H1 (cell line): ENCODE measurements at regions of chr2 and their contacts with region 1.

Region 1: DNA sequence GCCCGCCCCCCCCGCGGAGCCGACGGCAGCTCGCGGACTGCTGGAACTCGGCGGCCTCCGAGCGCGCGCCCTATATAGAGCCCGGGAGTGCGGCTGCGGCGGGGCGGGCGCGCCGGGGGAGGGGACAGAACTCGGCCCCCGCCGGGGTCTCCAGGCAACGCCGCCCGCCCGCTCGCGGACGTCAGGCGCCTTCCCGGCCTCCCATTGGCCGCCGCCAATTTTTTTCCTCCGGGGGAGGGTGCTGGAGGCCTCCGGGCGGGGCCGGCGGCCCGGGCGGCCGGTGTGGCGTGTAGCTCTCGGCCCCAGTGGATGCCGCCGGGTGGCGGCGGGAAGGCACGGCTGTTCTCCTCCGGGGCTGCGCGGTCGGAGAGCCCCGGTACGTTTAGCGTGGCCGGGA is at the start of gene ZFP36L2:
- DNase-seq: peak in 1 of 2 experiments; percentile 90
- H3K4me3 ChIP-seq: peak within 1 kb of the TSS; percentile 76 to 88 (median 85)
- H3K27ac ChIP-seq: peak within 1 kb of the TSS; percentile 95
- H3K4me1 ChIP-seq: peaks cover 5 to 16% (median 10%) of the 10 kb centered on the region in 4 experiments; a peak in 5 of 7 replicates
- H3K27me3 ChIP-seq: no peaks in the 10 kb centered on the region
- CTCF ChIP-seq: no peak
- EP300 ChIP-seq: no peak
- POLR2A ChIP-seq: peak in 1 of 2 experiments; percentile 86; a peak in 2 of 3 replicates
- RAD21 ChIP-seq: no peak
- total RNA-seq, gene ZFP36L2: 102 and 109 TPM in 2 replicates

Region 2: GRCh38 chr2:42928692-42929545 is 297.6 kb before region 1 on chr2:
- CTCF ChIA-PET with region 1: interaction called, 16 read pairs
- POLR2A ChIA-PET with region 1: no interaction called
- DNase-seq: peak in 1 of 2 experiments; percentile 70
- H3K4me3 ChIP-seq: no peak overlapping the region; a peak in 1 of 8 replicates
- H3K27ac ChIP-seq: peak overlapping the region; percentile 56
- H3K4me1 ChIP-seq: peaks cover 29 to 49% (median 41%) of the 10 kb centered on the region in 4 experiments
- H3K27me3 ChIP-seq: no peaks in the 10 kb centered on the region
- CTCF ChIP-seq: peak in 2 of 3 experiments; percentile 69 to 77; a peak in 3 of 4 replicates
- EP300 ChIP-seq: no peak
- POLR2A ChIP-seq: no peak
- RAD21 ChIP-seq: peak; percentile 33 to 48; a peak in 3 of 4 replicates

Region 3: DNA sequence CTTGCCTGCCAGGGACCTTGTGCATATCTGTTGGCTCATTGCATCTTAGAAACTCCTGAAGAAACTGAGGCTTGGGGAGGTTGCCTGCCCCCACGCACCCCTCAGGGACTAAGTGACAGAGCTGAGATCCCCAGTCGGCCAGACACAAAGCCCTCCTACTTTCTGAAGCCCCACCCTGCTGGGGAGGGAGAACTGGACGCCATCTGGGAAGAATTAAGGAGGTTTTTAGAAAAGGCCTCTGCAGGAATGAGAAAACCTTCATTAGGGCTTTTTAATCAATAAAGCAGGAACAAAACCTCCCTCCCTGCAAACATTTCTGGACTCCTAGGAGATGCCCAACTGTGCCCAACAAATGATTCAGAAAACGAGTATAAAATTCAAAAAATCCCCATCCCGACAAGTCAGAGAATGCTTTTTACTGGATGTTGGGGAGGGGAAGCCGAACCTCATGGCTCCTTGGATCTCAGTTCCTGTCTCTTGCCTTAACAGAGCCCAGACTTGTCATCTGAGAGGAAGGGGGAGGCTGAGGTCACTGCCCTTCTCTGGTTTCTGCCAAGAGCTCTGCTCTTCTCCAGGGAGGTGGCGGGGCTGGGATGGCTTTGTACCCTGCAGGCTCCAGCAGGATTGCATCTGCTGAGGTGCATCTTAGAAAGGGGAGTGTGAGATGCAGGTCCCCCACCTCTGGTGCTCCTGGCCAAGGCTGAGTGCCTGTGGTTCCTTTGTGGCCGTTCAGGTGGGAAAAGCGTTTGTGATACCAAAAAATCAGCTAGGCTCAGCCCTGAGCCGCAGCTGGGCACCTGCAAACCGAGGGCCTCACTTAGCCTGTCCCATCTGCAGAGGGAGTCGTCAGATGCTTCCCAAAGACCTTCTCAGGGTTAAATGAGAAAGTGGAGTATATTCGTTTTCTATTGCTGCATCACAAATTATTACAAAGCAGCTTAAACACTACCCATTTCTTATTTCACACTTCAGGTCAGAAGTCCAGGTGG is 142.6 kb before region 1 on chr2:
- CTCF ChIA-PET with region 1: interaction called, 18 read pairs
- POLR2A ChIA-PET with region 1: no interaction called
- DNase-seq: no peak
- H3K4me3 ChIP-seq: no peak overlapping the region
- H3K27ac ChIP-seq: no peak overlapping the region
- H3K4me1 ChIP-seq: peaks cover 0 to 16% (median 8%) of the 10 kb centered on the region in 4 experiments; a peak in 5 of 7 replicates
- H3K27me3 ChIP-seq: no peaks in the 10 kb centered on the region
- CTCF ChIP-seq: no peak
- EP300 ChIP-seq: no peak
- POLR2A ChIP-seq: no peak
- RAD21 ChIP-seq: no peak

Region 4: DNA sequence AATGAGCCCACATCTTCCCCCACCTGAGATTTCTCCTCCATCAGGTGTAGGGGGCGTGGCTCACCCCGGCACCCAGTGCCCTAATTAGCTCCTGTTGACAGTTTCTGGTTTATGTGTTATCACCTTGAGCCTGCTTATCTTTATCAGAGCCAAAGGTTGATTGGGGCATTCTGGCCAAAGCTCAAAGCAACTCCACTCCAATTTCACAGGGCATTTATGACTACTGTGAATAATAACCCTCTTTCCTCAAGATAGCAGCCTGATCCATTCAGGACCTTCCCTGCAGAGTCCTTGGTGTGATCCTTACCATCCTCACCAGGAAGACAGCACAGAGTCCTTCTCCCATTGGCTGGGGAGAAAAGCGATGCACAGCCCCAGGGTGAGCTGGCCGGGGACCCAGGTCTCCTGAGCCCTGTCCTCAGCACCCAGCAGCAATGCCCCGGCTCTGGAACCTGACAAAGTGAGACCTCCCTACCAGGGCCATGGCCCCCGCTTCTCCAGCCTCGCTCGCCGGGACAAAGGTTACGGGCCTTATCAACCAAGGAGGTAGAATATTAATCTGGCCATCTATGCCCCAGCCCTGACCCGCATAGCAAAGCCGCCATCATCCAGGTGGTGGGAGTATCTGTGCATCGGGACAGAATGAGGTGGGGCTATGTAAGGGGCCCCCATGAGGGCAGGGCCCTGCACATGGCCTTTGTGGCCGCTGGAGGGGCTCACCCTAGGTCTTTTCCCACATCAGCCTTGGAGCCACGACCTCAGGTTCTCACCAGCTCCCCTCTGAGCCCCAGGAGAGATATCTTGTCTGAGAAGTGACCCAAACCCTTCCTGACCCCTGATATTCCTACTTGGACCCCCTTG is 64.7 kb before region 1 on chr2:
- CTCF ChIA-PET with region 1: interaction called, 75 read pairs
- POLR2A ChIA-PET with region 1: interaction called, 4 read pairs
- DNase-seq: no peak
- H3K4me3 ChIP-seq: no peak overlapping the region
- H3K27ac ChIP-seq: no peak overlapping the region
- H3K4me1 ChIP-seq: peaks cover 0 to 12% (median 5%) of the 10 kb centered on the region in 4 experiments; a peak in 4 of 7 replicates
- H3K27me3 ChIP-seq: no peaks in the 10 kb centered on the region
- CTCF ChIP-seq: no peak
- EP300 ChIP-seq: no peak
- POLR2A ChIP-seq: no peak
- RAD21 ChIP-seq: no peak

Region 5: DNA sequence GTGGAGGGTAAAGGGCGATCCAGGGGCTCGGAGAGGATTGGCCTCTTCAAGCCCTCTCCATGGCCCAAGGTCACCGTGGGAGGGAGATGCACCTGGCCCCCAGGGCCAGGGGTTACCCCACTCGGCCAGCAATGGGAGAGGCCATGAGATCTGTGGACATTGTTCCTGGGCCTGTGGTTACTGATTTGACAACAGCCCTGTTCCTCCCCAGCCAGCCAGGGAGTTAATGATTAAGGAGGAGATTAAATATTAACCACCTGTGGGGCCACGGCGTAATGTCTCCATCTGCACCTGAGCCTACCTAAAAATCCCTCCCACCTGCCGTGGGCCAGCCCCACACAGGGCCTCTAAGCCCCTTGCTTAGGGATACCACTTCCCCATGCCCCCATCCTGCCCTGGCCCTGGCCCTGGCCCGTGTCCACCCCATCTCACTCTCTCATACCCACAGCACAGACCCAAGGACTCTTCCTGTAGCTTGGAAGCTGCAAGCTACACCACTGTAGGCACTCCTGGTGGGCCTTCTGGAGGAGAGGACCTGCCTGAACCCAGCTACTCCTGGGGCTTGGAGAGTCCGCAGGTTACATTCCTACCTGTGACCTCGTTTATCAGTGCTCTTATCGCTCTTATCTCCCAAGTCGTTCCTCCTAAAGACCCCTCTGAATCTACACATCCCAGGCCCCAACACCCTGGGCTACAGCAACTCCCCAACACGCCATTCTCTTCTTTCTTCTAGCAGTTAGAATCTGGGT is 32.3 kb before region 1 on chr2:
- CTCF ChIA-PET with region 1: interaction called, 41 read pairs
- POLR2A ChIA-PET with region 1: interaction called, 5 read pairs
- DNase-seq: no peak
- H3K4me3 ChIP-seq: no peak overlapping the region
- H3K27ac ChIP-seq: no peak overlapping the region
- H3K4me1 ChIP-seq: peaks cover 0 to 3% (median 1%) of the 10 kb centered on the region in 4 experiments; a peak in 4 of 7 replicates
- H3K27me3 ChIP-seq: no peaks in the 10 kb centered on the region
- CTCF ChIP-seq: no peak
- EP300 ChIP-seq: no peak
- POLR2A ChIP-seq: no peak
- RAD21 ChIP-seq: no peak

Region 6: GRCh38 chr2:43251171-43251731 is 24.7 kb after region 1 on chr2:
- CTCF ChIA-PET with region 1: interaction called, 91 read pairs
- POLR2A ChIA-PET with region 1: interaction called, 4 read pairs
- DNase-seq: no peak
- H3K4me3 ChIP-seq: no peak overlapping the region
- H3K27ac ChIP-seq: no peak overlapping the region
- H3K4me1 ChIP-seq: peaks cover 0 to 8% (median 0%) of the 10 kb centered on the region in 4 experiments; a peak in 3 of 7 replicates
- H3K27me3 ChIP-seq: no peaks in the 10 kb centered on the region
- CTCF ChIP-seq: no peak
- EP300 ChIP-seq: no peak
- POLR2A ChIP-seq: no peak; a peak in 1 of 3 replicates
- RAD21 ChIP-seq: no peak